HepG2 (cell line): ENCODE measurements at regions of chr5 and their contacts with region 1.

Region 1: GRCh38 chr5:10283927-10284635 is 23.6 kb downstream of the CMBL start:
- DNase-seq: peak; percentile 55
- ATAC-seq: peak; percentile 99
- H3K4me3 ChIP-seq: no peak overlapping the region
- H3K27ac ChIP-seq: no peak overlapping the region
- H3K4me1 ChIP-seq: no peaks in the 10 kb centered on the region
- H3K27me3 ChIP-seq: no peaks in the 10 kb centered on the region
- CTCF ChIP-seq: peak; percentile 90
- EP300 ChIP-seq: no peak
- POLR2A ChIP-seq: no peak
- RAD21 ChIP-seq: peak; percentile 89

Region 2: GRCh38 chr5:10233505-10233904 is 50.6 kb before region 1 on chr5:
- CTCF ChIA-PET with region 1: no interaction called
- POLR2A ChIA-PET with region 1: no interaction called
- in situ Hi-C with region 1: no loop called
- intact Hi-C with region 1: no loop called
- DNase-seq: peak; percentile 37
- ATAC-seq: peak; percentile 84
- H3K4me3 ChIP-seq: no peak overlapping the region
- H3K27ac ChIP-seq: no peak overlapping the region
- H3K4me1 ChIP-seq: no peaks in the 10 kb centered on the region
- H3K27me3 ChIP-seq: no peaks in the 10 kb centered on the region
- CTCF ChIP-seq: peak; percentile 62
- EP300 ChIP-seq: no peak
- POLR2A ChIP-seq: no peak
- RAD21 ChIP-seq: 0 out of 2 replicates have a peak, but pooled peaks have one; percentile 35

Region 3: DNA sequence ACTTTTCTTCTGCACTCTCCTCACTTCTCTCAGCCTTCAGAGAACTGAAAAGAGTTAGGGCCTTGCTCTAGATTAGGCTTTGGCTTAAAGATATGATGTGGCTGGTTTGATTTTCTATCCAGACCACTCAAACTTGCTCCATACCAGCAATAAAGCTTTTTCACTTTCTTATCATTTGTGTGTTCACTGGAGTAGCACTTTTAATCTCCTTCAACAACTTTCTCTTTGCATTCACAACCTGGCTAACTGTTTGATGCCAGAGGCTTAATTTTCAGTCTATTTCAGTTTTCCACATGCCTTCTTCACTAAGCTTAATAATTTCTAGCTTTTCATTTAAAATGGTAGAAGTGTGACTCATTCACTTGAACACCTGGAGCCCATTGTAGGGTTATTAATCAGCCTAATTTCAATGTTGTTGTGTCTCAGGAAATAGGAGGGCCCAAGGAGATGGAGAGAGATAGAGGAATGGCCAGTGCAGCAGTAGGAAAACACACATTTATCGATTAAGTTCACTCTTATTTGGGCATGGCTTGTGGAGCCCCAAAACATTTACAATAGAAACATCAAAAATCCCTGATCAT is 40.3 kb before region 1 on chr5:
- CTCF ChIA-PET with region 1: no interaction called
- POLR2A ChIA-PET with region 1: no interaction called
- in situ Hi-C with region 1: no loop called
- intact Hi-C with region 1: no loop called
- DNase-seq: no peak
- ATAC-seq: no peak
- H3K4me3 ChIP-seq: no peak overlapping the region
- H3K27ac ChIP-seq: no peak overlapping the region
- H3K4me1 ChIP-seq: peaks cover 27% of the 10 kb centered on the region
- H3K27me3 ChIP-seq: no peaks in the 10 kb centered on the region
- CTCF ChIP-seq: no peak
- EP300 ChIP-seq: no peak
- POLR2A ChIP-seq: no peak
- RAD21 ChIP-seq: no peak

Region 4: DNA sequence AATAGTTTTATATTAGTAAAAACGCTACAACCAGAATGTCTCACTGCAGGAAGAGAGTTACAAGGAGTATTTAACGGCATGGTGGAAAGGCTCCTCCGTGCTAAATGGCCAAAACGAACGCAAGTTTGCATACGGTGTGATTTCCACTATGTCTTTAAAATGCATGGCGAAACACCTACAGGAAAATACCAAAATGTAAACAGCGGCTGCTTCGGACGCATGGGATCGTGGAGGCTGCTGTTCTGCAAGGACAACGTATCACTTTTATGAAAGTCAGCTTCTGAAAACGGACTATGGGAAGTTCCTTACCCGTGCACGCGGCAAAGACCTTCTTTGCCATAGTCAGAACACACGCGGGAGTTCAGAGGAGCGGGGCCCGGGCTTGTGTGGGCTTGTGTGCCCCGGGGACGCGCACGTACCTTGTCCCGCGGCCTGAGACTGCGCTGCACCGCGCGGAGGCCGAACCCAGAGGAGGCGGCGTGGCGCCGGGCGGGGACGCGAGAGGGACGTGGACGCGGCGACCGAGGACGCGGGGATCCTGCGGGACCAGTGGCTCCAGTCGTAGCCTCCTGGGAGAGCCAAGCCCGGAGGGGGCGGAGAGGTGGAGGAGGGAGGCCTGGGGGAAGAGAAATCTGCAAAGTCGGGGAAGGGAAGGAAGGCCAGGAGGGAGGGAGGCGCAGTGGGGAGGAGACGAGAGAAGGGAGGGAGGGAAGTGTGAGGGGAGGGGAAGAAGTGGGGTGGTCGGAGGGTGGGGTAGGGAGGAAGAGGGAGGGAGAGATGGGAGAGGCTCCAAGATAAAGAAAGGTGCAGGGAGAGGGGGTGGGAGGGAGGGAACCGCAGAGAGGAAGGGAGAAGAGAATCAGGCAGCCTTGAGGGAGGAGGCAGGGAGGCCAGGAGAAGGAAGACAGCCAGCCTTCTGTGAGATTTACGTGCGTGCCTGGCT is 23.4 kb after region 1 on chr5 and contains the start of gene CMBL:
- CTCF ChIA-PET with region 1: no interaction called
- POLR2A ChIA-PET with region 1: no interaction called
- in situ Hi-C with region 1: no loop called
- intact Hi-C with region 1: loop called (anchors 1 kb)
- DNase-seq: peak; percentile 39
- ATAC-seq: peak; percentile 88
- H3K4me3 ChIP-seq: peak within 1 kb of the TSS; percentile 85 to 92 (median 87)
- H3K27ac ChIP-seq: peak within 1 kb of the TSS; percentile 64
- H3K4me1 ChIP-seq: peaks cover 68% of the 10 kb centered on the region
- H3K27me3 ChIP-seq: peaks cover 0 to 3% of the 10 kb centered on the region in 2 experiments; a peak in 1 of 5 replicates
- CTCF ChIP-seq: no peak
- EP300 ChIP-seq: no peak
- POLR2A ChIP-seq: peak in 1 of 2 experiments; percentile 51; a peak in 2 of 4 replicates
- RAD21 ChIP-seq: peak; percentile 30; the same call in 1 of the 2 replicates
- total RNA-seq, gene CMBL: 11.5 and 19.6 TPM in 2 replicates

Region 5: DNA sequence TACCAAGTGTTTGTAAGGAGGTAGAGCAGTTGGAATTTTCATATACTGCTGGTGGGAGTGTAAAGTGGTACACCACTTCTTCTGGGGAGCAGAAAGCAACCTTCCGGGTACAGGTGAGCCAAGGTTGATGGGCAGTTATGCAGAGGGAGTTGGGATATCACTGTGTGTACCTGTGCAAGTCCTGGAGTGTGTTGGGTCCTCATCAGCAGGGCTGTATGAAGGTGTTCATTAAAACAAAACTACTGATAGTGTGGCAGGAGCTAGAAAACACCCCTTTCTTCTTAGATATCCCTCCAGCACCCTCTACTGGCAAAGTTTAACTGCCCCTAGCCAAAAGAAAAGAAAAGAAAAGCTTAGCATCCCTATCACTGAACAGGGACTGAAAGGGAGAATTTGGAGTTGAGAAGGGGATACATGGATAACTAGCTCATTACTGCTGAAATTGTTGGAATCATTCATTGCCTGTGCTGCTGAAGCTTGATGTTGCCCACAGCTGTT is 80.2 kb after region 1 on chr5:
- CTCF ChIA-PET with region 1: interaction called, 8 read pairs
- POLR2A ChIA-PET with region 1: no interaction called
- in situ Hi-C with region 1: loop called (anchors 10 kb)
- intact Hi-C with region 1: loop called (anchors 1 kb)
- DNase-seq: peak; percentile 14
- ATAC-seq: no peak
- H3K4me3 ChIP-seq: no peak overlapping the region
- H3K27ac ChIP-seq: no peak overlapping the region
- H3K4me1 ChIP-seq: no peaks in the 10 kb centered on the region
- H3K27me3 ChIP-seq: no peaks in the 10 kb centered on the region
- CTCF ChIP-seq: peak; percentile 23; the same call in 1 of the 2 replicates
- EP300 ChIP-seq: no peak
- POLR2A ChIP-seq: no peak
- RAD21 ChIP-seq: no peak

Region 6: DNA sequence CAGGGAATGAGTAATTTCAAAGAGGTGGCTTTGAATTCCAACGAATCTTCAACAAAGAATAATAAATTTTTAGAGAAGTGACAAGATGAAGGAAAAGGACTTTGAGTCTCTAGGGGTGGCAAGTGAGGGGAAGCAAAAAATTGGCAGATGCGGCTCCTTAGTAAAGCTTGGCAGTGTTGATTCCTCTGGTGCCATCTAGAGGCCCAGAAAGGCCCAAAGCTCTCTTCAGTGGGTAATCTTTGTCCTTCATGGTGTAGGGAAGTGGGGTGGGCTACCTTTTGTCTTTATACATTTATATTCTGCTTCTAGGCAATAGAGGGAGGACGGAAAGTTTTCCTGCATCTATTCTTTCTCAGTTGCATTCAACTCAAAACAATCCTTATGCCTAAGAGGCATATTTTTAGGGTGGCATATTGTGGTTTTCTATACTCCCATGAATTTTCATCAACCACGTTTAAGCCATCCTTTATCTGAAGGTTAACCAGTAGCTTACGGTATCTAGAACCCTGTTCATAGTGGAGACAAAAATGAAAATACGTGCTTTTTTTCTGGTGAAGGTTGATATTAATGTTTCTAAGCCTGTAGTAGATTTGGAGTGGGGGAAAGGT is 140.1 kb after region 1 on chr5:
- CTCF ChIA-PET with region 1: interaction called, 13 read pairs
- POLR2A ChIA-PET with region 1: no interaction called
- in situ Hi-C with region 1: no loop called
- intact Hi-C with region 1: loop called (anchors 1 kb)
- DNase-seq: peak; percentile 13
- ATAC-seq: peak; percentile 85
- H3K4me3 ChIP-seq: no peak overlapping the region
- H3K27ac ChIP-seq: no peak overlapping the region
- H3K4me1 ChIP-seq: no peaks in the 10 kb centered on the region
- H3K27me3 ChIP-seq: no peaks in the 10 kb centered on the region
- CTCF ChIP-seq: peak; percentile 49
- EP300 ChIP-seq: no peak
- POLR2A ChIP-seq: no peak
- RAD21 ChIP-seq: no peak

Region 7: GRCh38 chr5:10627160-10627701 is 343.1 kb after region 1 on chr5:
- CTCF ChIA-PET with region 1: interaction called, 8 read pairs
- POLR2A ChIA-PET with region 1: no interaction called
- in situ Hi-C with region 1: loop called (anchors 10 kb)
- intact Hi-C with region 1: loop called (anchors 1 kb)
- DNase-seq: no peak
- ATAC-seq: peak; percentile 32
- H3K4me3 ChIP-seq: peak overlapping the region in 1 of 3 experiments; percentile 43; a peak in 2 of 6 replicates
- H3K27ac ChIP-seq: no peak overlapping the region
- H3K4me1 ChIP-seq: peaks cover 14% of the 10 kb centered on the region
- H3K27me3 ChIP-seq: peaks cover 0 to 22% of the 10 kb centered on the region in 2 experiments; a peak in 3 of 5 replicates
- CTCF ChIP-seq: no peak
- EP300 ChIP-seq: no peak
- POLR2A ChIP-seq: no peak
- RAD21 ChIP-seq: no peak

Region 8: DNA sequence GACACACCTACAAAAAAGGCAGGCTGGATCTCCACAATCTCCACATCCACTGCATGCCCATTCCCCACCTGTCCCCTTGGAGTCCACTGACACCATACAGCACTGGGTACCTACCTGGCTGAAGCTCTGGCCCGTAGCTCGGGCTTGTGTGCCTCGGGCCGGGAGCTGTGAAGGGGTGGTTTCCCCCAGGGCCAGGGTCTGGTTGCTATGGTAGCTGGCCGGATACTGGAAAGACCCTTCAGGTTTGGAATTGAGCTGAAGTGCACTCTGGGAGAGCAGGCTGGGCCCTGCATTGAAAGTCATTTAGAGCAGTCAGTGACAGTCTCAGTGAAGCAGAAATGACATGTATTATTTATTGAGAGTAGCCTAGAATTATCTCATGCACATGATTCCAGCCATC is 1112.8 kb after region 1 on chr5:
- CTCF ChIA-PET with region 1: no interaction called
- POLR2A ChIA-PET with region 1: no interaction called
- in situ Hi-C with region 1: no loop called
- intact Hi-C with region 1: no loop called
- DNase-seq: no peak
- ATAC-seq: no peak
- H3K4me3 ChIP-seq: no peak overlapping the region
- H3K27ac ChIP-seq: no peak overlapping the region
- H3K4me1 ChIP-seq: no peaks in the 10 kb centered on the region
- H3K27me3 ChIP-seq: no peaks in the 10 kb centered on the region
- CTCF ChIP-seq: no peak
- EP300 ChIP-seq: no peak
- POLR2A ChIP-seq: no peak
- RAD21 ChIP-seq: no peak